Heart left ventricle (tissue), 16 donors: ENCODE measurements at regions of chr19 and their contacts with region 1.

Region 1: GRCh38 chr19:5904352-5905113 is at the start of gene VMAC:
- DNase-seq: peak; percentile 100
- ATAC-seq: peak; percentile 84 to 91 (median 90)
- H3K4me3 ChIP-seq: peak within 1 kb of the TSS; percentile 61 to 98 (median 86)
- H3K27ac ChIP-seq: peak within 1 kb of the TSS; percentile 57 to 95 (median 91)
- H3K4me1 ChIP-seq: peaks cover 4 to 38% (median 23%) of the 10 kb centered on the region in 12 donors
- H3K27me3 ChIP-seq: no peaks in the 10 kb centered on the region
- CTCF ChIP-seq: no peak
- POLR2A ChIP-seq: peak in 1 of 2 donors; percentile 70
- total RNA-seq, gene VMAC: 1.7 to 3.9 (median 2.3) TPM

Region 2: DNA sequence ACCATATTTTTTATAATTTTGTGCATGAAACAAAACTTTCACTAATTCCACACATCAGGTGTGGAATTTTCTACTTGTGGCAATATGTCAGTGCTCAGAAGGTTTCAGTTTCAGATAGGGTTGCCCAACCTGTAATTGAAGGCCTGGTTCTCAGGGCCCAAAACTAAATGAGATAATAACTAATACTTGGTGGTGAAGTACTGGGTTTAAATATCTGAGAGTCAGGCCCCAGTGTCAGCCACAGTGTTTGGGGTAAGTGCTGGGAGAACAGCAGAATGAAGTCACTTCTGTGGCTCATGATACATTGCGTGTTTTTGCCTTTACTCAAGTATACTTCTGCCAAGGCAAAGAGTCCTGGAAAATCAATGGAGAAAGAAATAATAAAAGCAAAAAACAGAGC is 276.1 kb before region 1 on chr19:
- intact Hi-C with region 1: no loop called
- DNase-seq: no peak
- ATAC-seq: no peak
- H3K4me3 ChIP-seq: peak overlapping the region in 1 of 12 donors; percentile 9
- H3K27ac ChIP-seq: peak overlapping the region in 2 of 12 donors; percentile 36 to 66
- H3K4me1 ChIP-seq: peaks cover 11 to 91% (median 80%) of the 10 kb centered on the region in 12 donors
- H3K27me3 ChIP-seq: no peaks in the 10 kb centered on the region
- CTCF ChIP-seq: no peak
- POLR2A ChIP-seq: no peak

Region 3: DNA sequence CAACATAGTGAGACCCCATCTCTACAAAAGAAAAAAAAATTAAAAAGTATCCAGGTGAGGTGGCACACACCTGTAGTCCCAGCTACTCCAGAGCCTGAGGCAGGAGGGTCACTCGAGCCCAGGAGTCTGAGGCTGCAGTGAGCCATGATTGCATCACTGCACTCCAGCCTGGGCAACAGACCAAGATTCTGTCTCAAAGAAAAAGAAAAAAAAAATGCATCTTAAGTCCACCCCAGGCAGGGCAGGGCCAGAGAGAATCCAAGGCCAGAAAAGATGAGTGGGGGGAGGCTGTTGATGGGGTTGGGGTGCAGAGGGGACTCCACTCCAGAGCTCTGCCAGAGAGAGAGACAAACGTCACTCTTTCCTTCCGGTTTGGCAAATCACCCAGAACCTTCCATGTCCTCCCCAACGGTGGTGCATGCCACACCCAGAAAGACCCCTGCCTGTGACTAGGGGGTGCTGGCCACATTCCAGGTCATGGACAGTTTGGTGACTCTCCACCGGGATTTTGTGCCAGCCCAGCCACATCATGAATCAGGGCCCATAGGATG is 53.7 kb before region 1 on chr19:
- intact Hi-C with region 1: no loop called
- DNase-seq: no peak
- ATAC-seq: peak in 1 of 4 donors; percentile 22
- H3K4me3 ChIP-seq: no peak overlapping the region
- H3K27ac ChIP-seq: no peak overlapping the region
- H3K4me1 ChIP-seq: peaks cover 0 to 4% (median 0%) of the 10 kb centered on the region in 12 donors
- H3K27me3 ChIP-seq: no peaks in the 10 kb centered on the region
- CTCF ChIP-seq: no peak
- POLR2A ChIP-seq: no peak

Region 4: DNA sequence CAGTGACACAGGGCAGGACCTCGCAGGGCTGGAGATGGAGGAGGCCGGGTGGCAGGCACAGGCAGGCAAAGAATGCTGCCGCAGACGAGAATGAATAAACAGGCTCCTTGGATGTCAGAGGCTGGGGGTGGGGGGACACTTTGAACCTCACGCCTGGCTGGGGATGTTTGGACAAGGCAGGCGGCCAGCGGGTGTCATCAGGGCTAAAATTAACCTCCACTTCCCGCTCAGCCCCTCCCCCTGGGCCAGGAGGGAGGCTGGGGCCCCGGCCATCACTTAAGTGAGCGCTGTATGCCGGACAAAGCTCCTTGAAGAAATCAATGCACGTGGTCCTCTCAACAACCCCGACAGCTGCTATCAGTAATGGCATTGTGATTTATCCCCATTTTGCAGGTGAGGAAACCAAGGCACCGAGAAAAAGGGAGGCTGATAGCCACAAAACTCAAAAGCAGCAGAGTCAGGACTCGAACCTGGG is 23.9 kb before region 1 on chr19:
- intact Hi-C with region 1: no loop called
- DNase-seq: peak; percentile 77 to 89 (median 81)
- ATAC-seq: peak; percentile 89 to 98 (median 92)
- H3K4me3 ChIP-seq: no peak overlapping the region
- H3K27ac ChIP-seq: peak overlapping the region in 8 of 12 donors; percentile 20 to 80 (median 68)
- H3K4me1 ChIP-seq: peaks cover 0 to 14% (median 9%) of the 10 kb centered on the region in 12 donors
- H3K27me3 ChIP-seq: peaks cover 0 to 12% (median 0%) of the 10 kb centered on the region in 9 donors
- CTCF ChIP-seq: no peak
- POLR2A ChIP-seq: no peak

Region 5: GRCh38 chr19:5953680-5954213 is 49.2 kb after region 1 on chr19:
- intact Hi-C with region 1: loop called in 1 of 10 experiments (anchors 1 kb)
- DNase-seq: no peak
- ATAC-seq: no peak
- H3K4me3 ChIP-seq: peak overlapping the region in 1 of 12 donors; percentile 23
- H3K27ac ChIP-seq: peak overlapping the region in 11 of 12 donors; percentile 62 to 85 (median 69)
- H3K4me1 ChIP-seq: peaks cover 21 to 100% (median 86%) of the 10 kb centered on the region in 12 donors
- H3K27me3 ChIP-seq: no peaks in the 10 kb centered on the region
- CTCF ChIP-seq: no peak
- POLR2A ChIP-seq: no peak

Region 6: DNA sequence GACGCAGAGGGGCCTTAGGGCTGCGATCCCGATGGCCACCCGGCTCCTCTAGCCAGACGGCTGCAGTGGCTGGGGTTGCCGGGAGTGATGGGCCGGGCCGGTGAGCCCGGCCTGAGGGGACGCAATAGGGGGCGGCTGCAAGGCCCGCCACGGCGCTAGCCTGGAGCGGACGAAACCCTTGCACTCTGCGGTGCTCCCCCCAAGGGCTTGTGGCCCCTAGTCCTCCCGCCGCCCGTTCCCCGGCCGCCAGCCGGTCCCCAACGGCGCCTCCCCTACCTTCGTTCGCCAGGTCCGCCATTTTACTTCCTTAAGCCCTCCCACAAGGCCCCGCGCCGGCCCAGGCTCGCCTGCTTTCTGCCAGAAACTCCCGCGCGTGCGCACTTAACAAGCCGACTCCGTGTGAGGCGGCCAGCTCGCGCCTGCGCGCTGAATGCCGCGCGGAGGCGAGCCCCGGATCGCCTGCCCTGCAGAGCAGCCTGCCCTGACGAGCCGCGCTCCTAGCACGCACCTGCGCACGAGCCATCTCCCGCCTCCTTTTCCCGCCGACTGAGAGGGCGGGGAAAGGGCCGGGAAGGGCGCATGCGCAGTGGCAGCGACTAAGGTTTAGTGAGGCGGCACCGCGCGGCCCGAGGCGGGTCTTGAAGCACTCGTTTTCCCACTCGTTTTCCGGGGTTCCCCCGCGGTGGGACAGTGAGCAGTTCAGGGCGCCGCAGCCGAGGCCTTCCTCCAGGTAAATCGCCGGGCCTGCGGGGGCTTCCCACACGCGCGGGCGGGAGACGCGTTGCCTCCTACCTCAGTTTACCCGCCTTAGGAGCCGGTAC is 73.5 kb after region 1 on chr19 and contains the start of gene RANBP3:
- intact Hi-C with region 1: loop called in 3 of 10 experiments (anchors 2 to 10 kb)
- DNase-seq: peak; percentile 97 to 100 (median 99)
- ATAC-seq: peak; percentile 97 to 99 (median 98)
- H3K4me3 ChIP-seq: peak within 1 kb of the TSS; percentile 69 to 100 (median 94)
- H3K27ac ChIP-seq: peak within 1 kb of the TSS; percentile 45 to 95 (median 89)
- H3K4me1 ChIP-seq: peaks cover 10 to 59% (median 43%) of the 10 kb centered on the region in 12 donors
- H3K27me3 ChIP-seq: no peaks in the 10 kb centered on the region
- CTCF ChIP-seq: no peak
- POLR2A ChIP-seq: peak in 1 of 2 donors; percentile 80
- total RNA-seq, gene RANBP3: 48.9 to 80.7 (median 58.0) TPM